Calu3 (cell line): ENCODE measurements at regions of chr2 and their contacts with region 1.

Region 1: DNA sequence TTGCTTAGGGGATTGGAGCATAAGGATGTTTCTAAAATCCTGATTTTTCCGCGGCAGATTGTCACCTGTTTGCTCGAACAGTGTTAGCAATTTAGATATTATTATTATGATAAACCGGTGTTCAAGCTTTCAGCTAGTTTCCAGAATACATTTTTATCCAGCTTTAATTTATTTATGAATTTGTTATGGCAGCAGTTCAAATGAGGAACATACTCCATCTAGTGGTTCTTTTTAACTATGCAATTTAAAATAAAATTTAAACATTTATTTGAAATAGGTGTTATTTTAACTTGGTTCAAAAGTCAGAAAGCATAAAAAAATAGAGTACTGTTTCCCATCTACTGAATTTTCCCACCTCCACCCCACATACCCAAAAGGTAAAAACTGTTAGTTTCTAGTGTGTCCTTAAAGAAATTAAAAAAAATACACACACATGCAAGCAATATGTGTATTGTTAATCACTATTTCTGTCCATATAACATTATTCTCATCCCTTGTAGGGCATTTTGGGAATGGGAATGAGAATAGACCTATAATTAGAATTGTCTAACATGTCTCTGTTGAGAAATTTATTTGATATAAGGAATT is 23.2 kb downstream of the ACOXL start:
- DNase-seq: no peak
- H3K4me3 Mint-ChIP-seq: no peak overlapping the region
- H3K27ac Mint-ChIP-seq: no peak overlapping the region
- H3K4me1 Mint-ChIP-seq: no peaks in the 10 kb centered on the region
- H3K27me3 Mint-ChIP-seq: peaks cover 32% of the 10 kb centered on the region
- CTCF ChIP-seq: peak; percentile 32

Region 2: DNA sequence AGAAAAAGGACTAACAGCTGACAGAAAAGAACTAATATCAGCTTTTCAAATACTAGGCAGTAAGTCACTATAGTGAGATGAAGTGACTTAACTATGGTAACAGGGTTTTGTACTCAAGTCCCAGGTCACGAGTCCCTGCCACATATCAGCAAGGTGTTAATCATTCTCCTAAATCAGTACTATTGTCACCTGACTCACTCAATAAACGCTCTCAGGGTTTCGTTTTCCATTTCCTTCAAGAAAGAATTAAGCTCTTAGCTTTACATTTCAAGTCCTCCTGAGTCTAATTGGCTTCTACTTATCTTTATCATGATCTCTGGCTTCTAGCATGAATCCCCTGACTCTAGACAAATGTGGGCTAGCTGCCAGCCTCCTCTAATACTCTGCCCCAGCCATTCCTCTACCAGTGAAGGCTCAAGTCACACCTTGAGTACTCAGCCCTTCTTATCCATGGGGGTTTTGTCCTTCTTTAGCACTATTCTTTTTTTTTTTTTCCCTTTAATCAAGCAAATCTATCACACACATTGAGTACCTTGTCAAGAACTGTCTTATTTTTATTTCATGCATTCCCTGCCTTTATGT is 97.8 kb before region 1 on chr2:
- CTCF ChIA-PET with region 1: interaction called, 4 read pairs
- intact Hi-C with region 1: loop called (anchors 5 kb)
- DNase-seq: peak; percentile 61
- H3K4me3 Mint-ChIP-seq: peak overlapping the region; percentile 36
- H3K27ac Mint-ChIP-seq: peak overlapping the region; percentile 87
- H3K4me1 Mint-ChIP-seq: peaks cover 29% of the 10 kb centered on the region
- H3K27me3 Mint-ChIP-seq: no peaks in the 10 kb centered on the region
- CTCF ChIP-seq: no peak

Region 3: GRCh38 chr2:110677530-110678456 is 77.8 kb before region 1 on chr2 and contains the start of gene BUB1:
- CTCF ChIA-PET with region 1: interaction called, 4 read pairs
- intact Hi-C with region 1: loop called (anchors 5 kb)
- DNase-seq: peak; percentile 98
- H3K4me3 Mint-ChIP-seq: peak within 1 kb of the TSS; percentile 94
- H3K27ac Mint-ChIP-seq: peak within 1 kb of the TSS; percentile 91
- H3K4me1 Mint-ChIP-seq: peaks cover 30% of the 10 kb centered on the region
- H3K27me3 Mint-ChIP-seq: peaks cover 23% of the 10 kb centered on the region
- CTCF ChIP-seq: no peak
- total RNA-seq, gene BUB1: 63.6 and 66.1 TPM in 2 replicates